ENCODE measurements at regions of chr1 and their contacts with region 1.

Region 1: GRCh38 chr1:54103414-54103813 is 49.4 kb downstream of the CDCP2 start:
- DNase-seq: no peak
- H3K4me3 ChIP-seq: no peak overlapping the region
- H3K27ac ChIP-seq: no peak overlapping the region
- H3K4me1 ChIP-seq: peaks cover 6 to 32% (median 17%) of the 10 kb centered on the region in 4 experiments
- H3K27me3 ChIP-seq: no peaks in the 10 kb centered on the region

Region 2: DNA sequence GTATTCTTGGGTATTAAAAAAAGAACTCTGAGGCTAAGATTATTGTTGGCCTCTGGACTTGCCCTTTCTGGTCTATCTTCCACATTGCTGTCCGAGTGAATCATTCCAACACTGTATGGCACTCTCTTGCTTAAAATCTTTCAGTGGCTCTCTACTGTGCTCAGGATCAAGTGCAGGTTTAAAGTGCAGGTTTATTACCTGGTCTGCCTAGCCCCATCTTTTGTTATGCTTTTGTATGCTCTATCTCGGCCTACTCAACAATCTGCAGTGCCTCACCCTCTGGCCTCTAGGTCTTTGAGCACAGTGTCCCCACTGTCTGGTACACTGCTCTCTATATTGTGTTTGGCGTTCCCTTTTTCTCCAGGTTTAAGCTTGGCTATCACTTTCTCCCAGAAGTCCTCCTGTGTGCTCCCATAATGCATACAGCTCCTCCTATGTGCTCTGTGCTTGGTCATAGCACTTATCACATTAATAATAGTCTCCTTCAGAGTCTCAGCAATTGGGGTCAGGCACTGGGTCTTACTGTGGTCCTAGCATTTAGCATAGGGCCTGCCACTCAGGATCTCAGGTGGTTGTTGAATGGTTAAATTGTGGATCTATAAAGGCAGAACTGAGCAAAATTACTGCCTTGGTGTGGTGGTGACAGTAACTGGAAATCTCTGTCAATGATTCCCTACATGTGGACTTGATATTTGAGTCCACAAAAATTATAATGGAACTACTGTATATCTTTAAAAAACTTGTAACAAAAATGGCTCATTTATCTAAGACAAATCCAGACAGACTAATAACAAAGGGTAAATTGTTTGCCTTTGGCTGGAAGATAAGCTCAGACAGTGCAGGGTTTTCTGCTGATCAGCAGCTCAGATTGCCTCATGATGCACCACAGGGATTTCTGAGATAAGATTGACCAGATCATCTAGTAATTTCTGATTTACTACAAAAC is 74.8 kb before region 1 on chr1:
- CTCF ChIA-PET with region 1: no interaction called
- POLR2A ChIA-PET with region 1: no interaction called
- DNase-seq: no peak
- H3K4me3 ChIP-seq: no peak overlapping the region
- H3K27ac ChIP-seq: no peak overlapping the region
- H3K4me1 ChIP-seq: no peaks in the 10 kb centered on the region
- H3K27me3 ChIP-seq: no peaks in the 10 kb centered on the region

Region 3: GRCh38 chr1:54114955-54115354 is 11.5 kb after region 1 on chr1:
- CTCF ChIA-PET with region 1: interaction called, 14 read pairs
- POLR2A ChIA-PET with region 1: no interaction called
- DNase-seq: no peak
- H3K4me3 ChIP-seq: no peak overlapping the region
- H3K27ac ChIP-seq: no peak overlapping the region
- H3K4me1 ChIP-seq: peaks cover 0 to 4% (median 0%) of the 10 kb centered on the region in 4 experiments
- H3K27me3 ChIP-seq: no peaks in the 10 kb centered on the region

Region 4: GRCh38 chr1:54137514-54138061 is 34.2 kb after region 1 on chr1:
- CTCF ChIA-PET with region 1: no interaction called
- POLR2A ChIA-PET with region 1: no interaction called
- DNase-seq: peak; percentile 9 to 57 (median 41)
- H3K4me3 ChIP-seq: no peak overlapping the region
- H3K27ac ChIP-seq: no peak overlapping the region
- H3K4me1 ChIP-seq: peaks cover 0 to 17% (median 10%) of the 10 kb centered on the region in 4 experiments
- H3K27me3 ChIP-seq: no peaks in the 10 kb centered on the region

Region 5: DNA sequence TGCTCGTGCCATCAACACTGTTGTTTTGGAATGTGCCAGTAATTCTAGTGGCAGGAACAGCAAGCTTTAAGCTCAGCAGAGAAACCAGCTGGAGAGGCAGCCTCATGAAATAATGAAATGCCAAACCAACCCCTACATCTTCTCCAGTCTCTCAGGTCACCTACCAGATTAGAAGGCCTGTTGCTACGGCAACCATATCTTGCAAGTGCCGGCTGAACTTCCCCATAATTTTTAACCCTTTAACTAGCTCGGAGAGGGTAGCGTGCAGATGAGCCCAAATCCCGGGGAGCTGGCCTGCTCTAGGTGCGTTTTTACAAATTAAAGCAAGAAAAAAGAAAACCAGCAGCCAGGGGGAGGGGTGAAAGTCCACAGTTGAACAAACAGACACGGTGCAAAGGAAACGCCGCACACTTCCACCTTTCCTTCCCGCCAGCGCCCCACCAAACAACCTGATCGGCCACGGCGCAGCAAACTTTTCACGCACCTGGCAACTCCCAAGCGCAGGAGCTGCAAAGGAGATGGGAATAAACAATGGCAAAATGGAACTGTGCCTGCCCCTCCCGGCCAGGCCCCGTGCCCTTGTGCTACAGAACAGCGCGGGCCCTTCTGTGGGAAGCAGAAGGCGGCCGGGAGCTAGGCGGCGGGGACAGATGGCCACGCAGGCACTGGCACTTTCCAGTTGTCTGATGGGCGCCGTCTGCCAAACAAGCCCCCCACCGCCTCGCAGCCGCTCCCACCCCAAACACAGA is 252.7 kb after region 1 on chr1:
- CTCF ChIA-PET with region 1: no interaction called
- POLR2A ChIA-PET with region 1: no interaction called
- DNase-seq: peak; percentile 73 to 90 (median 84)
- H3K4me3 ChIP-seq: peak overlapping the region in 6 of 7 experiments; percentile 21 to 69 (median 45)
- H3K27ac ChIP-seq: peak overlapping the region in 1 of 2 experiments; percentile 55
- H3K4me1 ChIP-seq: peaks cover 3 to 67% (median 47%) of the 10 kb centered on the region in 4 experiments
- H3K27me3 ChIP-seq: no peaks in the 10 kb centered on the region

Measured in common myeloid progenitor, CD34-positive (primary cell).